WTC11 (cell line): ENCODE measurements at regions of chr5 and their contacts with region 1.

Region 1: DNA sequence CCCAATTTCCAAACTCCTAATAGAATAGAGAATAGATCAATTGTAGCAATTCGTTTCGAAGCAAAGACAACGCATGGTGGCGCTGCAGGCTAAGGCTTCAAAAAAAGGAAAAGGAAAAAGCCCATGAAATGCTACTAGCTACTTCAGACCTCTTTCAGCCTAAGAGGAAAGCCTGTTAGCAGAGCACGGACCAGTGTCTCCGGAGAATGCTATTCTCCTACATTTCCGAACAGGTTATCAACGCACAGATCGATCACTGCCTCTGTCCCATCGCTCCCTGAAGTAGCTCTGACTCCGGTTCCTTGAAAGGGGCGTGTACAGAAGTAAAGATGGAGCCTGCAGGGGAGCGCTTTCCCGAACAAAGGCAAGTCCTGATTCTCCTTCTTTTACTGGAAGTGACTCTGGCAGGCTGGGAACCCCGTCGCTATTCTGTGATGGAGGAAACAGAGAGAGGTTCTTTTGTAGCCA is at the start of gene PCDHB15:
- DNase-seq: peak; percentile 85
- ATAC-seq: peak; percentile 87
- H3K4me3 Mint-ChIP-seq: peak within 1 kb of the TSS; percentile 85
- H3K27ac Mint-ChIP-seq: peak within 1 kb of the TSS; percentile 93
- H3K4me1 Mint-ChIP-seq: peaks cover 18% of the 10 kb centered on the region
- H3K27me3 Mint-ChIP-seq: no peaks in the 10 kb centered on the region
- CTCF ChIP-seq: peak; percentile 70
- total RNA-seq, gene PCDHB15: 7.7 to 8.7 TPM (median 8.4 TPM) in 3 replicates

Region 2: DNA sequence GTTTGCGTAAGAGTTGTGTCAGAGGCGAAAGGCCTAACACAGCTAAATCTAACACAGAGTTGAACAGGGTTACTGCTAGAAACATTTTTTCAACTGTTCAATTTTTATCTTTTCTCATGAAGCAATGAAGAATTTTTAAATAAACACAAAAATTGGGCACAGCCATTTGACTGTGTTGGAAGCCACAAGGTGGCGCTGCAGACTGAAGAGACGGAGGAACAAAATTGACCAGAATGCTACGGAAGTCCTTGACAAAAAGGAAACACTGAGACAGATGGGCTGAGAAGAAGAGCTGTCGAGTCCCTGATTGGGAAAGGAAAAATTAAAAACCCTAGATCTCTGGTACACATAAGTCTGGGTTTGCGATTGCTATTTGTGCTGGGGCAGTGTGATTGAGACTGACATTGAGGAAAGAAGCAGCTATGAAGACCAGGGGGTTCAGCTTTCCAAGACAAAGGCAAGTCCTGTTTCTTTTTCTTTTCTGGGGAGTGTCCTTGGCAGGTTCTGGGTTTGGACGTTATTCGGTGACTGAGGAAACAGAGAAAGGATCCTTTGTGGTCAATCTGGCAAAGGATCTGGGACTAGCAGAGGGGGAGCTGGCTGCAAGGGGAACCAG is 58.3 kb before region 1 on chr5 and contains the start of gene PCDHB9:
- CTCF ChIA-PET with region 1: interaction called, 26 read pairs
- POLR2A ChIA-PET with region 1: no interaction called
- DNase-seq: peak; percentile 71
- ATAC-seq: peak; percentile 58
- H3K4me3 Mint-ChIP-seq: peak within 1 kb of the TSS; percentile 21
- H3K27ac Mint-ChIP-seq: no peak within 1 kb of the TSS; the same call in 1 of the 2 replicates
- H3K4me1 Mint-ChIP-seq: peaks cover 15% of the 10 kb centered on the region
- H3K27me3 Mint-ChIP-seq: peaks cover 4% of the 10 kb centered on the region; the same call in 1 of the 2 replicates
- CTCF ChIP-seq: peak; percentile 49; the same call in 1 of the 2 replicates
- total RNA-seq, gene PCDHB9: 1.6 to 2.3 TPM (median 1.7 TPM) in 3 replicates

Region 3: DNA sequence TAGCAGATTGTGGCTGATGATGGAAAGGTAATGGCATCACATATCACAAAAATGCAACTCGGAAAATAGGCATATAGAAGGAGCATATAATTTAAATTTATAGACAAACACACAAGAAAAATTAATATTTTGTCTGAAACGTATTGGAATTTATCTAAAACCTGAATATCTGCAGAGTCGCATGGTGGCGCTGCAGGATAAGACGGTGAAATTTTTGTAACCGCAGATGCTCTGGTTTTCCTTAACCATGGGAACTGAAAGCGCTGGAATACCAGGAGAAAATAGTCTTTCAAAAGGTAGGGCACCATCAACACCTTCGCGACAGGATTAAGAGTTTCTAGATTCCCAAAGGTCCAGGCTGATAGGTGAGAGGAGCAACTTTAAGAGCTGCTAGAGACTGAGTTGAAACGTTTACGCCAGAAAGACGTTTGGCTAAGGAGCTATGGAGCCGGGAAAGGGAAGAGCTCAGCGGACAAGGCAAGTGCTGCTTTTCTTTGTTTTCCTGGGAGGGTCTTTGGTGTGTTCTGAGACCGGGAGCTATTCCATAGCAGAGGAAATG is 11.1 kb before region 1 on chr5:
- CTCF ChIA-PET with region 1: interaction called, 31 read pairs
- POLR2A ChIA-PET with region 1: no interaction called
- DNase-seq: peak; percentile 47
- ATAC-seq: peak; percentile 64
- H3K4me3 Mint-ChIP-seq: peak overlapping the region; percentile 69
- H3K27ac Mint-ChIP-seq: no peak overlapping the region
- H3K4me1 Mint-ChIP-seq: peaks cover 5% of the 10 kb centered on the region
- H3K27me3 Mint-ChIP-seq: peaks cover 3% of the 10 kb centered on the region; the same call in 1 of the 2 replicates
- CTCF ChIP-seq: peak; percentile 45

Region 4: GRCh38 chr5:141338538-141339306 is 93.4 kb after region 1 on chr5 and contains the start of gene PCDHGA2:
- CTCF ChIA-PET with region 1: interaction called, 19 read pairs
- POLR2A ChIA-PET with region 1: no interaction called
- DNase-seq: peak; percentile 60
- ATAC-seq: peak; percentile 78
- H3K4me3 Mint-ChIP-seq: peak within 1 kb of the TSS; percentile 30; the same call in 1 of the 2 replicates
- H3K27ac Mint-ChIP-seq: no peak within 1 kb of the TSS
- H3K4me1 Mint-ChIP-seq: peaks cover 1% of the 10 kb centered on the region; the same call in 1 of the 2 replicates
- H3K27me3 Mint-ChIP-seq: no peaks in the 10 kb centered on the region; the same call in 1 of the 2 replicates
- CTCF ChIP-seq: peak; percentile 30; the same call in 1 of the 2 replicates
- total RNA-seq, gene PCDHGA2: 0.66 to 0.96 TPM (median 0.94 TPM) in 3 replicates

Region 5: DNA sequence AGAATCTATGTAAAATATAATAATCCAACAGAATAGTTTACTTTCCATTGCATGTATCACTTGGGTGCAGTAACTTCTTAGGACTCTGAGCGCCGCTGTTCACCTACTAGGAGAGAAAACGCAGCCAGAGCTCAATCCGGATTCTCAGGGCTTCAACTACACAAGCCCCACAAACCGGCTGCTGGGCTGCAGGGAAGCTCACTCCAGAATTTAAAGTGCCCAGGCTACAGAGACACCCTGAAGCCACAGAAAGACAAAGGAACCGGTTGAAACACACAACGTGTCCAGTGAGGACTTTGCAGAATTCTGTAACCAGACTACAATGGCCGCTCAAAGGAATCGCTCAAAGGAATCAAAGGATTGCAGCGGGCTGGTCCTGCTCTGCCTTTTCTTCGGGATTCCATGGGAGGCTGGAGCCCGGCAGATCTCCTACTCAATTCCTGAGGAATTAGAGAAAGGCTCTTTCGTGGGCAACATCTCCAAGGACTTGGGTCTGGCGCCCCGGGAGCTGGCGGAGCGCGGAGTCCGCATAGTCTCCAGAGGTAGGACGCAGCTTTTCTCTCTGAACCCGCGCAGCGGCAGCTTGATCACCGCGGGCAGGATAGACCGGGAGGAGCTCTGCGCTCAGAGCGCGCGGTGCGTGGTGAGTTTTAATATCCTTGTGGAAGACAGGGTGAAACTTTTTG is 167.7 kb after region 1 on chr5 and contains the start of gene PCDHGA10:
- CTCF ChIA-PET with region 1: interaction called, 37 read pairs
- POLR2A ChIA-PET with region 1: interaction called, 3 read pairs
- DNase-seq: peak; percentile 78
- ATAC-seq: peak; percentile 43
- H3K4me3 Mint-ChIP-seq: peak within 1 kb of the TSS; percentile 94
- H3K27ac Mint-ChIP-seq: peak within 1 kb of the TSS; percentile 51
- H3K4me1 Mint-ChIP-seq: peaks cover 27% of the 10 kb centered on the region
- H3K27me3 Mint-ChIP-seq: peaks cover 28% of the 10 kb centered on the region
- CTCF ChIP-seq: peak; percentile 71
- total RNA-seq, gene PCDHGA10: 10.7 to 11.9 TPM (median 11.0 TPM) in 3 replicates

Region 6: DNA sequence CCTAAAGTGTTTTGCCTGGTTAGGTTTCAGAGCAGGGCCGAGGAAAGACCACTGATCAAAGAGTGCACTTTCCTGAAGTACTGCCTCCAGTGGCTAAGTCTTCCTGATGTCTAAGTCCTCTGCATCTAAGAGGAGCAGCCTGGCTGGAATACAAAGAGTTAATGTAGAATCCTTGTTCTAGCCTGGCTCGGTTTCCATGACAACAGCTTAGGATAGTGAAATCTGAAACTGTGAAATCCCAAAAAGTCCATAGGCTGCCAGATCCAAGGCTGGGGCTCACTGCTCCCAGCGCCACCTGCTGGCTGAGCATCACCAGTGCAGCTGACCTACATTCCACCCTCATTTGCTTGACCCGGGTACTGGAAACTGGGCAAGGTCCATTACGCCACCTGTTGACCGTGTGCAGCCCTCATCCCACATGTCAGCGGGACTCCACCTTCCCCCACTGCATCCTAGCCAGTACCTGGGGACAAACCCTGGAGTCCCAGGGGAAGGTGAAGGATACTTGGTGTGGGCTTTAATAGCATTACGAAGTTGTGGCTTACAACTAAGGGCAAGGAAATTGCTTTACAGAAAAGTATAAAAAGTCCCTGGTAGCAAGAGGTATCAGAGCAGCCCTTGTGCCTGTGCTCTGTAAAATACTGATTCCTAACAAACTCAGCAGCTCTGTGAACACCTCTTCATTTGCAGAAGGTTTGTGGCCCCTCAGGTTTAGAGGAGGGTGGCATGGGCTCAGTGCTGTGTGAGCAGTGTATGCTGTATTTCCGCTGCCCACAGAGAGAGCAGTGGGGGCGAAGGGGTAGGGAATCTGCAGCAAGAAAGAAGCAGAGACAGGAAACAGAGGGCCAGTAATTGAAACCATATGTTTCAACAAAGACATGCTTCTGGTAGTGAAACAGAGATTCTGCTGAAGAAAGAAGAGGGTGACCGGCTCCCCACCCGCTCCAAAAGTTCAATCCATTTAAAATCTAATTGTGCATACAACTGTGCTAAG is 279.6 kb after region 1 on chr5:
- CTCF ChIA-PET with region 1: interaction called, 28 read pairs
- POLR2A ChIA-PET with region 1: no interaction called
- DNase-seq: peak; percentile 93
- ATAC-seq: peak; percentile 98
- H3K4me3 Mint-ChIP-seq: no peak overlapping the region
- H3K27ac Mint-ChIP-seq: peak overlapping the region; percentile 87
- H3K4me1 Mint-ChIP-seq: peaks cover 23% of the 10 kb centered on the region
- H3K27me3 Mint-ChIP-seq: no peaks in the 10 kb centered on the region
- CTCF ChIP-seq: peak; percentile 97